Mammary epithelial cell (primary cell): ENCODE measurements at regions of chr2 and their contacts with region 1.

Region 1: DNA sequence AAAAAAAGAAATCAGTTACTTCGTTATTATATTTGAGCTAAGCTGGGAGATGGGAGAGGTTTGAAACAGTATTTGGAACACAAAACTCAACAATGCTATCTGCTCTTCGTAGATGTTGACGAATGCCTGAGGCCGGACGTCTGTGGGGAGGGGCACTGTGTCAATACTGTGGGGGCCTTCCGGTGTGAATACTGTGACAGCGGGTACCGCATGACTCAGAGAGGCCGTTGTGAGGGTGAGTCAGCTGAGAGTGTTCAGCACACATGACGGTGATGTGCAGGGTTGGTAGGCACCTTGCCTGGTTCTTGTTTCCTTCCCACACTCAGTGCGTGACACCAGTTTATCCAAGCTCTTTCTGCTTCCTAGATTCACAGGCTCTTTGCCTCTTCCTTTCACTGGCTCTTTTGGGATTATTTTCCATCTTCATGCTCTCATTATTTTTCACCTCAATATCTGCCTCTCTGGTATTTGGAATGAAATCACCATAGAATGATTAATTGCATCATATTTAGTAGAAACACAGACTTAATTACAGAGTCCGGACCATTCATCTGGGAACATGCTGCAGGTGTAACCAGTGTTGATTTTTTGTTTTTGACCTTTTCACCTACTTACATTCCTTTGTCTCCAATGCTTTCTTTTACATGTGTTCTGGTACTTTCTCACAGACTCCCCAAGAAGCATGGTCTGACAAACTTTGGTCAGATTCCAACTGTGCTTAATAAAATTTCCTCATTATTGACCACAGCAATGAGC is 200.6 kb upstream of the RASGRP3 start:
- DNase-seq: peak; percentile 50
- H3K4me3 ChIP-seq: no peak overlapping the region
- H3K27ac ChIP-seq: no peak overlapping the region
- H3K4me1 ChIP-seq: no peaks in the 10 kb centered on the region
- H3K27me3 ChIP-seq: no peaks in the 10 kb centered on the region
- CTCF ChIP-seq: no peak

Region 2: DNA sequence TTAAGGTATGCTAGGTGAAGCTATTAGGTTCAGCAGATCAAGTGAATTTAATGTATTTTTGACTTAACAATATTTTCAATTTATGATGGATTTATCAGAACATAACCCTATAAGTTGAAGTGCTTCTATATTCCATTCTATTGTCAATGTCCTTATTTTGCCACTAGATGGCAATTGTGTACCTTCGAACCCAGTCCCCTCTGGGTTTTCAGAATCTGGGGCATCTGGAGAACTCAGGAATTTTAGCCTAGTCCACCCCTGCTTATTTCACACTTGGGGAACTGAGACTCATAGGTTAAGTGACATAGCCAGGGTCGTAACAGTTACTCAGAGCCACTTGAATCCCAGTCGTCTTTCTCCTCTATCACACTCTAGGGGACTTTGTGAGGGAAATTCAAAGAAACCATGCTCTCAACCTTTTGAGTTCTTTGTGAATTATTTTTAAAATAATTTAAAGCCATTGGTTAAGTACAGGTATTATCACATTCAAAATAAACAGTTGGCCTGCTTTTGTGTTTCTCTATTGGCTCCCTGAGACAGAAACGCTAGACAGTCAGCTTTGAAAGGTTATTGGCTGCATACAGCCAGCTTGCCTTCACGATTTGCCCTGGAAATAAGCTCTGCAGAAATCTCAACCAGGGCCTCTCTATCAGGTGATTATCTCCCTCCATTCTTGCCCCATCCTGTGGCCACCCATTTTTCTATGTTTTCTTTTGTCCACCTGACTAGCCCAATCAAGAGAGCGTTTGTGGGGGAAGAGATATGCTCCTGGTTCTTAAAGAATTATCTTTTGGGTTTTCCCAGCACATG is 503.0 kb before region 1 on chr2:
- CTCF ChIA-PET with region 1: no interaction called
- dilution Hi-C with region 1: no loop called
- in situ Hi-C with region 1: loop called in 1 of 2 experiments (anchors 25 kb)
- intact Hi-C with region 1: loop called (anchors 2 kb)
- DNase-seq: peak; percentile 19
- H3K4me3 ChIP-seq: no peak overlapping the region
- H3K27ac ChIP-seq: no peak overlapping the region
- H3K4me1 ChIP-seq: no peaks in the 10 kb centered on the region
- H3K27me3 ChIP-seq: no peaks in the 10 kb centered on the region
- CTCF ChIP-seq: peak; percentile 36 to 66

Region 3: GRCh38 chr2:33134086-33134771 is 141.6 kb before region 1 on chr2:
- CTCF ChIA-PET with region 1: no interaction called
- dilution Hi-C with region 1: no loop called
- in situ Hi-C with region 1: loop called in 1 of 2 experiments (anchors 25 kb)
- intact Hi-C with region 1: no loop called
- DNase-seq: peak; percentile 96
- H3K4me3 ChIP-seq: peak overlapping the region; percentile 4 to 28 (median 14)
- H3K27ac ChIP-seq: peak overlapping the region; percentile 9
- H3K4me1 ChIP-seq: peaks cover 37% of the 10 kb centered on the region
- H3K27me3 ChIP-seq: no peaks in the 10 kb centered on the region
- CTCF ChIP-seq: peak; percentile 15 to 18

Region 4: GRCh38 chr2:33599175-33599942 is 323.5 kb after region 1 on chr2 and contains the start of gene FAM98A:
- CTCF ChIA-PET with region 1: no interaction called
- dilution Hi-C with region 1: no loop called
- in situ Hi-C with region 1: loop called in 1 of 2 experiments (anchors 25 kb)
- intact Hi-C with region 1: no loop called
- DNase-seq: peak; percentile 98
- H3K4me3 ChIP-seq: peak within 1 kb of the TSS; percentile 55 to 100 (median 93)
- H3K27ac ChIP-seq: peak within 1 kb of the TSS; percentile 46
- H3K4me1 ChIP-seq: peaks cover 5% of the 10 kb centered on the region
- H3K27me3 ChIP-seq: no peaks in the 10 kb centered on the region
- CTCF ChIP-seq: no peak
- total RNA-seq, gene FAM98A: 32.7 to 63.1 TPM